ENCODE measurements at regions of chr18 and their contacts with region 1.

Region 1: GRCh38 chr18:3447895-3448837 is 1.8 kb upstream of the TGIF1 start:
- DNase-seq: peak in 1 of 2 donors; percentile 98
- H3K4me3 ChIP-seq: peak overlapping the region; percentile 74 to 89
- H3K27ac ChIP-seq: peak overlapping the region; percentile 99
- H3K4me1 ChIP-seq: peaks cover 20% of the 10 kb centered on the region
- H3K27me3 ChIP-seq: no peaks in the 10 kb centered on the region
- CTCF ChIP-seq: no peak
- POLR2A ChIP-seq: peak in 1 of 2 donors; percentile 81

Region 2: GRCh38 chr18:3281456-3282400 is 166.4 kb before region 1 on chr18:
- intact Hi-C with region 1: loop called (anchors 10 kb)
- DNase-seq: no peak
- H3K4me3 ChIP-seq: no peak overlapping the region
- H3K27ac ChIP-seq: no peak overlapping the region
- H3K4me1 ChIP-seq: no peaks in the 10 kb centered on the region
- H3K27me3 ChIP-seq: no peaks in the 10 kb centered on the region
- CTCF ChIP-seq: peak; percentile 57 to 77 (median 74)
- POLR2A ChIP-seq: no peak

Region 3: DNA sequence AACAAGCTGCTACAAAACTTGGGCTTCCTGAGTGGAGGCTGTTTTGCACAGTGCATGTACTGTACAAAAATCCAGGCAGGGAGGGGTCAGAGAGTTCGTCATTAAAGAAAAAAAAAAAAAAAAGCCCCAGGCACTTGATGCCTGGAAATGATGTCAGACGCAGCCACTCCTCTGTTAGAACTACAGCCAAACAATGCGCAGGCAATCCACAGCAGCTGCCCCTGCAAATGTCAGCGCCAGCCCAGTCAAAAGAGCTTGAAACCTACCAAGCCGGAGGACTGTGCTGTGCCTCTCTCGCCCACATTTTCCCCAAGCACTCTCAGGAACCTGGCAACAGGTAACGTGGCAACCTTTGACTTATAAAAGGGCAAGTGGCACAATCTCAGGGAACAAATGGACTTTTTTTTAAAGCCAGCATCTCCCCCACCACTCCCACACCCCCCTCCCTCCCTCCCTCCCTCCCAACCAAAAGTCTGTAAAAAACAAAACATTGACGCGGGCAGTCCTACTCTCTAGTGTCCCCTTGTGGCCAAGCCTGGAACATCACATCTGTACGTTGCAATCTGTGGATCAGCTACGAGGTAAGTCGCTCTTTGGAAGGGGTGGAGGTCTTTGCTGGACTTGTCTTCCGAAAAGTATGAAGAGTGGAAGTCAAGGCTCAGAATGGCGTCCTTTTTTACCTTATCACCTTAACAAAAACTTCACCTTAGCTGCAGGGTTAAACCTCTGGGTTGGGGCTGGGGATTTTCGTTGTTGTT is 145.9 kb after region 1 on chr18:
- intact Hi-C with region 1: loop called (anchors 2 kb)
- DNase-seq: peak in 1 of 2 donors; percentile 98
- H3K4me3 ChIP-seq: peak overlapping the region; percentile 45 to 53
- H3K27ac ChIP-seq: peak overlapping the region; percentile 94
- H3K4me1 ChIP-seq: peaks cover 47% of the 10 kb centered on the region
- H3K27me3 ChIP-seq: no peaks in the 10 kb centered on the region
- CTCF ChIP-seq: peak; percentile 28 to 88 (median 86)
- POLR2A ChIP-seq: peak in 1 of 2 donors; percentile 44

Region 4: GRCh38 chr18:3604498-3605408 is 156.6 kb after region 1 on chr18:
- intact Hi-C with region 1: loop called (anchors 2 kb)
- DNase-seq: no peak
- H3K4me3 ChIP-seq: peak overlapping the region; percentile 41 to 43
- H3K27ac ChIP-seq: peak overlapping the region; percentile 88
- H3K4me1 ChIP-seq: peaks cover 42% of the 10 kb centered on the region
- H3K27me3 ChIP-seq: no peaks in the 10 kb centered on the region
- CTCF ChIP-seq: no peak
- POLR2A ChIP-seq: no peak

Region 5: GRCh38 chr18:3665780-3666525 is 217.8 kb after region 1 on chr18:
- intact Hi-C with region 1: loop called (anchors 10 kb)
- DNase-seq: peak in 1 of 2 donors; percentile 91
- H3K4me3 ChIP-seq: peak overlapping the region; percentile 24 to 26
- H3K27ac ChIP-seq: peak overlapping the region; percentile 14
- H3K4me1 ChIP-seq: peaks cover 7% of the 10 kb centered on the region
- H3K27me3 ChIP-seq: no peaks in the 10 kb centered on the region
- CTCF ChIP-seq: peak; percentile 77 to 97 (median 95)
- POLR2A ChIP-seq: no peak

Region 6: GRCh38 chr18:3675994-3676393 is 227.8 kb after region 1 on chr18:
- intact Hi-C with region 1: no loop called
- DNase-seq: no peak
- H3K4me3 ChIP-seq: no peak overlapping the region
- H3K27ac ChIP-seq: no peak overlapping the region
- H3K4me1 ChIP-seq: no peaks in the 10 kb centered on the region
- H3K27me3 ChIP-seq: no peaks in the 10 kb centered on the region
- CTCF ChIP-seq: no peak
- POLR2A ChIP-seq: no peak